PC-3 (cell line): ENCODE measurements at regions of chr5 and their contacts with region 1.

Region 1: DNA sequence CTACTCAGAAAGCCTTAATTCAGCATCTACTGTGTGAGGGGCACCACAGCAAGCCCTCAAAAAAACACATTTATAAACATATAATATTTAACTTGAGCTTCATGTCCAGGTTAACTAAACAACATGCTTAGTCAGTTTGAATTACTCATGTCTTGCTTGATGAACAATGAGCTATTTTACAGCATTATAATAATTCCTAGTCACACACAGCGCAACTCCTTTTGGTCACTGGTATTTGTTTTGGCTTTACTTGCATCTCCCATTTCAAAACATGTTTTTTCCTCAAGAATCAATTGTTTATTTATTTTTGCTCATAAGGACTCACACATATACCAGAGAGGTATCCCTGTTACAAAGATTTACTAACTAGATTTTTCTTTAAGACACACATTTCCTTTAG is 616.7 kb upstream of the DAB2 start:
- DNase-seq: peak; percentile 88
- ATAC-seq: peak; percentile 85
- H3K4me3 ChIP-seq: no peak overlapping the region
- H3K27ac ChIP-seq: peak overlapping the region; percentile 32
- H3K4me1 ChIP-seq: peaks cover 30% of the 10 kb centered on the region
- H3K27me3 ChIP-seq: no peaks in the 10 kb centered on the region
- CTCF ChIP-seq: no peak

Region 2: DNA sequence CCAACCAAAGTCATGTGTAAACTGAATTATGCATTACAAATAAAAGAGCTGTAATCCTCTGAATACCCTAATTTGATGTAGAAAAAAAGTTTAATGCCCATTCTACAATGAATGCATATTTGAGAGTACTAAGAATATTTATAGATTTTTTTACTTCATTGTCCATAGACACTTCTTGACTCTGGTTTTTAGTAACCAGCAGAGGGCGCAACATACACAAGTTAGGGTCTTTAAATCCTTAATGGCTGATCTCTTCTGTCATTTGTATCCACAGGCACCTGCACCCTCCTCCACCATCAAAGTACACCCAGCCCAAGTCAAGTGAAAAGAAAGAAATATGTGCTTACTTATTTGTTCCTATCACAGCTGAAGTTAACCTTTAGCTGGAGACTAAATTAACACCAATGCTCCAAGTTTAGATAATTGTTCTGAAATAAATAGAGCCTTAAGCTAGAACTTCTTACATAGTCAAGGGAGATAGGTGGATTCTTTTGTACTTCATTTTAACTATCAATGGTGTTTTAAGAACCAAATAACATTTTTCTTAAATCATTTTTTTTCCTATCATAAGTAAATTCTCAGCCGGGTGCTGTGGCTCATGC is 92.5 kb before region 1 on chr5:
- CTCF ChIA-PET with region 1: no interaction called
- POLR2A ChIA-PET with region 1: no interaction called
- intact Hi-C with region 1: loop called (anchors 5 kb)
- DNase-seq: peak; percentile 89
- ATAC-seq: peak; percentile 81
- H3K4me3 ChIP-seq: no peak overlapping the region
- H3K27ac ChIP-seq: no peak overlapping the region
- H3K4me1 ChIP-seq: no peaks in the 10 kb centered on the region
- H3K27me3 ChIP-seq: no peaks in the 10 kb centered on the region
- CTCF ChIP-seq: peak; percentile 93

Region 3: DNA sequence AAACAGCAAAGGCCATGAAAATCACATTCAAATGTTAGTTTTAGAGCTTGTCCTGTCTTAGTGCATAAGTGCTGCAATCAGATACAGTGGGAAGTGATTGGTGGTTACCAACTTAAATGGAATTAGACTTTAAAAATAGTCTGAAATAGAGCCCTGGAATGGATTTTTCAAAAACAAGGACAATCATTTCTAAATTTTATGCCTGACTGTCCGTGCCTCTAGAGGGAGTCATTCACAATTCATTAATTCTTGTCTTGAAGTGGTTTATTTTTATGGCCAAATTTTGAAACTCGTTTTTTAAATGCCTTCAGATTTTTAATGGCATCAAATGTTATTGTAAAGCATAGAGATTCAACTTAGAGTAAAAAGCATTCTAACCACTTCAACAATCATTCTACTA is 54.8 kb before region 1 on chr5:
- CTCF ChIA-PET with region 1: no interaction called
- POLR2A ChIA-PET with region 1: no interaction called
- intact Hi-C with region 1: no loop called
- DNase-seq: peak; percentile 39
- ATAC-seq: no peak
- H3K4me3 ChIP-seq: no peak overlapping the region
- H3K27ac ChIP-seq: no peak overlapping the region
- H3K4me1 ChIP-seq: no peaks in the 10 kb centered on the region
- H3K27me3 ChIP-seq: no peaks in the 10 kb centered on the region
- CTCF ChIP-seq: peak; percentile 80

Region 4: GRCh38 chr5:40112875-40113274 is 71.4 kb after region 1 on chr5:
- CTCF ChIA-PET with region 1: no interaction called
- POLR2A ChIA-PET with region 1: no interaction called
- intact Hi-C with region 1: loop called (anchors 2 kb)
- DNase-seq: no peak
- ATAC-seq: no peak
- H3K4me3 ChIP-seq: no peak overlapping the region
- H3K27ac ChIP-seq: no peak overlapping the region
- H3K4me1 ChIP-seq: peaks cover 30% of the 10 kb centered on the region
- H3K27me3 ChIP-seq: no peaks in the 10 kb centered on the region
- CTCF ChIP-seq: no peak